ENCODE measurements at regions of chr7 and their contacts with region 1.

Region 1: GRCh38 chr7:1579481-1580421 is 9.9 kb upstream of the PSMG3 start:
- DNase-seq: peak; percentile 59
- H3K4me3 Mint-ChIP-seq: no peak overlapping the region
- H3K27ac Mint-ChIP-seq: no peak overlapping the region
- H3K4me1 Mint-ChIP-seq: peaks cover 7% of the 10 kb centered on the region
- H3K27me3 Mint-ChIP-seq: peaks cover 2% of the 10 kb centered on the region

Region 2: GRCh38 chr7:2209146-2209960 is 629.6 kb after region 1 on chr7:
- intact Hi-C with region 1: loop called (anchors 1 kb)
- DNase-seq: peak; percentile 26
- H3K4me3 Mint-ChIP-seq: no peak overlapping the region
- H3K27ac Mint-ChIP-seq: no peak overlapping the region
- H3K4me1 Mint-ChIP-seq: no peaks in the 10 kb centered on the region
- H3K27me3 Mint-ChIP-seq: no peaks in the 10 kb centered on the region

Region 3: GRCh38 chr7:2471396-2471795 is 891.6 kb after region 1 on chr7:
- intact Hi-C with region 1: loop called (anchors 1 kb)
- DNase-seq: no peak
- H3K4me3 Mint-ChIP-seq: no peak overlapping the region
- H3K27ac Mint-ChIP-seq: no peak overlapping the region
- H3K4me1 Mint-ChIP-seq: peaks cover 5% of the 10 kb centered on the region
- H3K27me3 Mint-ChIP-seq: peaks cover 6% of the 10 kb centered on the region